Head of caudate nucleus (tissue), 42 donors: ENCODE measurements at regions of chr16 and their contacts with region 1.

Region 1: GRCh38 chr16:82263521-82264143 is 93.6 kb upstream of the MPHOSPH6 start:
- DNase-seq: peak; percentile 14 to 90 (median 77)

Region 2: GRCh38 chr16:82344157-82344556 is 80.5 kb after region 1 on chr16:
- intact Hi-C with region 1: loop called (anchors 2 kb)
- DNase-seq: peak in 37 of 42 donors; percentile 21 to 80 (median 49)

Region 3: GRCh38 chr16:82580298-82580890 is 316.8 kb after region 1 on chr16:
- intact Hi-C with region 1: loop called (anchors 10 kb)
- DNase-seq: peak in 41 of 42 donors; percentile 11 to 85 (median 62)

Region 4: GRCh38 chr16:82653550-82654511 is 390.2 kb after region 1 on chr16:
- intact Hi-C with region 1: no loop called
- DNase-seq: no peak